ENCODE measurements at regions of chr2 and their contacts with region 1.

Region 1: GRCh38 chr2:215711471-215712034 is 275.7 kb upstream of the FN1 start:
- DNase-seq: peak; percentile 72
- ATAC-seq: peak; percentile 42
- H3K4me3 ChIP-seq: no peak overlapping the region
- H3K27ac ChIP-seq: peak overlapping the region; percentile 64
- H3K4me1 ChIP-seq: peaks cover 58% of the 10 kb centered on the region
- H3K27me3 ChIP-seq: no peaks in the 10 kb centered on the region
- CTCF ChIP-seq: no peak
- EP300 ChIP-seq: peak in 1 of 2 experiments; percentile 61; a peak in 2 of 4 replicates
- POLR2A ChIP-seq: no peak
- RAD21 ChIP-seq: no peak

Region 2: GRCh38 chr2:215693193-215693998 is 18.2 kb before region 1 on chr2:
- CTCF ChIA-PET with region 1: no interaction called
- POLR2A ChIA-PET with region 1: interaction called, 39 read pairs
- in situ Hi-C with region 1: no loop called
- intact Hi-C with region 1: no loop called
- DNase-seq: peak; percentile 93
- ATAC-seq: peak; percentile 92
- H3K4me3 ChIP-seq: peak overlapping the region in 1 of 3 experiments; percentile 13; a peak in 1 of 6 replicates
- H3K27ac ChIP-seq: peak overlapping the region; percentile 80
- H3K4me1 ChIP-seq: peaks cover 47% of the 10 kb centered on the region
- H3K27me3 ChIP-seq: no peaks in the 10 kb centered on the region
- CTCF ChIP-seq: no peak
- EP300 ChIP-seq: peak in 1 of 2 experiments; percentile 96; a peak in 2 of 4 replicates
- POLR2A ChIP-seq: peak in 1 of 2 experiments; percentile 47; a peak in 1 of 4 replicates
- RAD21 ChIP-seq: no peak

Region 3: GRCh38 chr2:215727507-215728503 is 16.3 kb after region 1 on chr2:
- CTCF ChIA-PET with region 1: no interaction called
- POLR2A ChIA-PET with region 1: interaction called, 4 read pairs
- in situ Hi-C with region 1: no loop called
- intact Hi-C with region 1: loop called (anchors 2 kb)
- DNase-seq: peak; percentile 85
- ATAC-seq: peak; percentile 98
- H3K4me3 ChIP-seq: no peak overlapping the region
- H3K27ac ChIP-seq: peak overlapping the region; percentile 23
- H3K4me1 ChIP-seq: peaks cover 42% of the 10 kb centered on the region
- H3K27me3 ChIP-seq: no peaks in the 10 kb centered on the region
- CTCF ChIP-seq: no peak
- EP300 ChIP-seq: peak in 1 of 2 experiments; percentile 78; a peak in 2 of 4 replicates
- POLR2A ChIP-seq: no peak
- RAD21 ChIP-seq: no peak